K562 (cell line): ENCODE measurements at regions of chr17 and their contacts with region 1.

Region 1: GRCh38 chr17:27654654-27655524 is 23.9 kb downstream of the LGALS9 start:
- DNase-seq: peak; percentile 91 to 95 (median 92)
- ATAC-seq: peak; percentile 95
- H3K4me3 ChIP-seq: no peak overlapping the region
- H3K27ac ChIP-seq: no peak overlapping the region
- H3K4me1 ChIP-seq: peaks cover 7 to 18% of the 10 kb centered on the region in 2 experiments; a peak in 4 of 5 replicates
- H3K27me3 ChIP-seq: no peaks in the 10 kb centered on the region
- CTCF ChIP-seq: peak; percentile 89 to 99 (median 91)
- EP300 ChIP-seq: no peak
- POLR2A ChIP-seq: no peak
- RAD21 ChIP-seq: peak; percentile 71 to 85

Region 2: DNA sequence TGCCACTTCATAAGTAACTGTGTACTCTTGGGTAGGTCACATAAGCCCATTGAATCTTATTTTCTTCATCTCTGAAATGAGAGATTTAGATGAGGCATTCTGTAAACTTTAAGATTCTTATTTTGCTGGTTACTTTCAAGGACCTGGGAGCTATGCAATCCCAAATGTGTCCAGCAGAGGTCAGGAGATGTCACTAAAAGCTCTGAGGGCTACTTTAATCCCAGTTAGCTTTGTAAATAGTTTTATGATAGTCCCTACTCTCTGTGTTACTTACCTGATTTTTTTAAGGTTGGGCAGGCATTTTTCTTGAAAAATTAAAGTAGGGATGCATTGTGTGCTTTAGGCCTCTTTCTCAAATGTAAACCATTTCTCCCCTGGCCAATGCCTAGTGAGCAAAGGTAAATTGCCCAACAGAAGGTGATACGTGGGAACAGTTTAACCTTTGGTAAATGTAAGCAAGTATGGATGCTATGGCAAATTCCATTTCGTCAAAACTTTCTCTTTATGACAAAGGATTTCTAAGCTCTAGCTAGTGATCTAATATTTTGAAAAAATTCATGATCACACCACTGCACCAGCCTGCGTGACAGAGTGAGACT is 418.1 kb before region 1 on chr17:
- CTCF ChIA-PET with region 1: interaction called, 4 read pairs
- POLR2A ChIA-PET with region 1: interaction called, 7 read pairs
- in situ Hi-C with region 1: loop called (anchors 10 kb)
- intact Hi-C with region 1: loop called (anchors 2 kb)
- DNase-seq: peak; percentile 69 to 80 (median 74)
- ATAC-seq: peak; percentile 81
- H3K4me3 ChIP-seq: no peak overlapping the region
- H3K27ac ChIP-seq: no peak overlapping the region
- H3K4me1 ChIP-seq: peaks cover 0 to 4% of the 10 kb centered on the region in 2 experiments; a peak in 2 of 5 replicates
- H3K27me3 ChIP-seq: no peaks in the 10 kb centered on the region
- CTCF ChIP-seq: peak; percentile 79 to 91 (median 84)
- EP300 ChIP-seq: no peak
- POLR2A ChIP-seq: no peak
- RAD21 ChIP-seq: peak; percentile 91 to 93

Region 3: DNA sequence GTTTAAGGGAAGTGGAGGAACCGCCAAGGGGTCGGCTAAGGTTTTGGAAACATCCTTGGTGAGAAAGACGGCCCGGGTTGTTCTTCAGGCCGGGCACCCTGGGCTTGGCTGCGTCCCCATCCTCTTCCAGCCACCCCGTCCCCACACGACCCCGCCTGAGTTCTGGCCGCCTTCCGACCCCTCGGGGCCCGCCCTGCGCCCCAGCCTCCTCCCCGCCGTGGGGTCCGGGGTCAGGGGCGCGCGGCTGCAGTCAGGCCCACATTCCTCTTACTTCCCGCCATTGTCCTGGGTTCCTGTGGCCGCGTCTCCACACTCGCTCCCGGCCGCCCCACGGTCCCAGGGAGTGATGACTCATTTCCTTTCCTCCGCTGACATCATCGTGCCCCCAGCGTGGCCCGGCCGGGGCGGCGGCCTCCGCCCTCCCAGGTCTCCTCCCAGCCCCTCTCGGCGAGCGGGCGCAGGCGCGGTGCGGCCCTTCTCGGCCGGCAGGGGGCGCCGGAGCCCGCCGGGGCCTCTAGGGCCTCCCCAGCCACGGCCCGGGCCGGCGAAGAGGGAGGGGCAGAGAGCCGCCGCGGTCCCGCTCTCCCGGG is 301.3 kb before region 1 on chr17:
- CTCF ChIA-PET with region 1: interaction called, 7 read pairs
- POLR2A ChIA-PET with region 1: no interaction called
- in situ Hi-C with region 1: no loop called
- intact Hi-C with region 1: loop called (anchors 5 kb)
- DNase-seq: peak; percentile 97
- ATAC-seq: peak; percentile 92
- H3K4me3 ChIP-seq: peak overlapping the region; percentile 79
- H3K27ac ChIP-seq: peak overlapping the region; percentile 98
- H3K4me1 ChIP-seq: peaks cover 33 to 35% of the 10 kb centered on the region in 2 experiments
- H3K27me3 ChIP-seq: no peaks in the 10 kb centered on the region
- CTCF ChIP-seq: peak; percentile 82 to 97 (median 93)
- EP300 ChIP-seq: peak; percentile 81
- POLR2A ChIP-seq: peak; percentile 91
- RAD21 ChIP-seq: peak; percentile 97

Region 4: DNA sequence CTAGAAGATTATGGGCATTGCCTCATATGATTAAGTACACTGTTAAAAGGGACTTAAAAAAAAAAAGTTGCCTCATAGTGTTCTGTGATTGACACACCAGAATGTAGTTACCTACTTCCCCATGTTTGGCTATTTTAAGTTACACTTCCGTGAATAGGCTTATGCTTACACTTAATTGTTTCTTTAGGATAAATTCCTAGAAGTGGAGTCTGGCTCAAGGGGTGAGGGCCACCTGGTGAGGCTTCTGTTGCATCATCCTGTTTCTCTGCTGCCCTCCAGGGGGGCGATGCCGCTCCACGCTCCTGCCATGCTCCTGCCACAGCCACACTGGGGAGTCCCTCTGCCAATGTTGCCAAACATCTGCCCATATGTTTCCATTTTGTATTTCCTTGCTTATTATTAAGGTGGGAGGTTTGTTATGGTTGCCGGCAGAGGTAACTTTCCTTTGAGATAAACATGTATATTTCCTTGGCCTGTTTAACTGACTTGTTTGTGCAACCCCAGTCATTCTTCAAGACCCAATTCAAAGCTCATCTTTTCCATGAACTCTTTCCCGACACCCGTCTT is 125.6 kb before region 1 on chr17:
- CTCF ChIA-PET with region 1: no interaction called
- POLR2A ChIA-PET with region 1: no interaction called
- in situ Hi-C with region 1: no loop called
- intact Hi-C with region 1: no loop called
- DNase-seq: peak; percentile 37 to 86 (median 60)
- ATAC-seq: peak; percentile 73
- H3K4me3 ChIP-seq: no peak overlapping the region
- H3K27ac ChIP-seq: peak overlapping the region; percentile 80
- H3K4me1 ChIP-seq: peaks cover 36 to 81% of the 10 kb centered on the region in 2 experiments
- H3K27me3 ChIP-seq: no peaks in the 10 kb centered on the region
- CTCF ChIP-seq: peak in 2 of 3 experiments; percentile 34 to 40; a peak in 3 of 6 replicates
- EP300 ChIP-seq: peak; percentile 93
- POLR2A ChIP-seq: no peak
- RAD21 ChIP-seq: peak; percentile 35 to 56; a peak in 3 of 4 replicates

Region 5: GRCh38 chr17:27609611-27610303 is 45.1 kb before region 1 on chr17:
- CTCF ChIA-PET with region 1: interaction called, 3 read pairs
- POLR2A ChIA-PET with region 1: interaction called, 4 read pairs
- in situ Hi-C with region 1: loop called (anchors 5 kb)
- intact Hi-C with region 1: no loop called
- DNase-seq: peak in 1 of 4 experiments; percentile 31
- ATAC-seq: peak; percentile 61
- H3K4me3 ChIP-seq: no peak overlapping the region
- H3K27ac ChIP-seq: no peak overlapping the region
- H3K4me1 ChIP-seq: peaks cover 5 to 15% of the 10 kb centered on the region in 2 experiments; a peak in 4 of 5 replicates
- H3K27me3 ChIP-seq: no peaks in the 10 kb centered on the region
- CTCF ChIP-seq: peak; percentile 52 to 65 (median 54)
- EP300 ChIP-seq: no peak
- POLR2A ChIP-seq: no peak
- RAD21 ChIP-seq: peak in 1 of 2 experiments; percentile 43; a peak in 2 of 4 replicates

Region 6: GRCh38 chr17:27760069-27760885 is 105.4 kb after region 1 on chr17:
- CTCF ChIA-PET with region 1: interaction called, 28 read pairs
- POLR2A ChIA-PET with region 1: interaction called, 3 read pairs
- in situ Hi-C with region 1: loop called (anchors 5 kb)
- intact Hi-C with region 1: loop called (anchors 1 kb)
- DNase-seq: peak; percentile 63 to 79 (median 70)
- ATAC-seq: peak; percentile 86
- H3K4me3 ChIP-seq: no peak overlapping the region
- H3K27ac ChIP-seq: no peak overlapping the region
- H3K4me1 ChIP-seq: peaks cover 0 to 11% of the 10 kb centered on the region in 2 experiments; a peak in 3 of 5 replicates
- H3K27me3 ChIP-seq: peaks cover 0 to 27% of the 10 kb centered on the region in 2 experiments; a peak in 3 of 5 replicates
- CTCF ChIP-seq: peak; percentile 82 to 95 (median 93)
- EP300 ChIP-seq: no peak
- POLR2A ChIP-seq: no peak
- RAD21 ChIP-seq: peak; percentile 81 to 89

Region 7: GRCh38 chr17:27771586-27771985 is 116.7 kb after region 1 on chr17:
- CTCF ChIA-PET with region 1: no interaction called
- POLR2A ChIA-PET with region 1: no interaction called
- in situ Hi-C with region 1: no loop called
- intact Hi-C with region 1: no loop called
- DNase-seq: no peak
- ATAC-seq: no peak
- H3K4me3 ChIP-seq: no peak overlapping the region
- H3K27ac ChIP-seq: no peak overlapping the region
- H3K4me1 ChIP-seq: no peaks in the 10 kb centered on the region
- H3K27me3 ChIP-seq: peaks cover 25 to 78% of the 10 kb centered on the region in 2 experiments
- CTCF ChIP-seq: no peak
- EP300 ChIP-seq: no peak
- POLR2A ChIP-seq: no peak
- RAD21 ChIP-seq: no peak

Region 8: DNA sequence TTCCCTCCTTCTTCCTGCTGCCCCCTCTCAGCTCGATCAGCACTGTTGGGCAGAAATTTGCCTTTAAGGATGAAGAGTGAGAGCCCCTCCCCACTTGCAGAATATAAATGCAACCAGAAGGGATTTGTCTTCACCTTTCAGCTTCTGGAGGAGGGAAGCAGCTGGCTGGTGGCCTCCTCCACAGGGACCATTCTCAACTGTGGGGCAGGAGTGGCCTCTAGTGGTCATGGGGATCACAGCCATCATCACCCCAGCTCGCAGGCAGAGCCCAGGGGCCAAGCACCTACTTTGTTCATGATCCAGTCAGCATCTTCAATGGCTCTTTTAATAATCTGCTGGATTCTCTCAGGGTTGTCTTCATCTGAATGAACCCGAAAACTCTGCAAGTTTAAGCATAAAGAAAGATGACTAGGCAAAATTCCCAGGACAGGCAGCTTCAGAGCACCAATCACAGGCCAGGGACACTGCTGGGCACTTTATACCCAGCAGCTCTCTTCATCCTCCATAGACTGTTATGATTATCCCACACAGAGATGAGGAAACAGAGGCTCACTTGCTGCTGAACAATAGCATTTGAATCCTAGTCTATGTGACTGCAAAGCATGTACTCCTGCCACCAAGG is 225.2 kb after region 1 on chr17:
- CTCF ChIA-PET with region 1: interaction called, 19 read pairs
- POLR2A ChIA-PET with region 1: no interaction called
- in situ Hi-C with region 1: loop called (anchors 5 kb)
- intact Hi-C with region 1: loop called (anchors 1 kb)
- DNase-seq: peak; percentile 78 to 85 (median 80)
- ATAC-seq: peak; percentile 98
- H3K4me3 ChIP-seq: no peak overlapping the region
- H3K27ac ChIP-seq: no peak overlapping the region
- H3K4me1 ChIP-seq: no peaks in the 10 kb centered on the region
- H3K27me3 ChIP-seq: peaks cover 21 to 40% of the 10 kb centered on the region in 2 experiments
- CTCF ChIP-seq: peak; percentile 90 to 95 (median 92)
- EP300 ChIP-seq: no peak
- POLR2A ChIP-seq: no peak
- RAD21 ChIP-seq: peak; percentile 87 to 92

Region 9: DNA sequence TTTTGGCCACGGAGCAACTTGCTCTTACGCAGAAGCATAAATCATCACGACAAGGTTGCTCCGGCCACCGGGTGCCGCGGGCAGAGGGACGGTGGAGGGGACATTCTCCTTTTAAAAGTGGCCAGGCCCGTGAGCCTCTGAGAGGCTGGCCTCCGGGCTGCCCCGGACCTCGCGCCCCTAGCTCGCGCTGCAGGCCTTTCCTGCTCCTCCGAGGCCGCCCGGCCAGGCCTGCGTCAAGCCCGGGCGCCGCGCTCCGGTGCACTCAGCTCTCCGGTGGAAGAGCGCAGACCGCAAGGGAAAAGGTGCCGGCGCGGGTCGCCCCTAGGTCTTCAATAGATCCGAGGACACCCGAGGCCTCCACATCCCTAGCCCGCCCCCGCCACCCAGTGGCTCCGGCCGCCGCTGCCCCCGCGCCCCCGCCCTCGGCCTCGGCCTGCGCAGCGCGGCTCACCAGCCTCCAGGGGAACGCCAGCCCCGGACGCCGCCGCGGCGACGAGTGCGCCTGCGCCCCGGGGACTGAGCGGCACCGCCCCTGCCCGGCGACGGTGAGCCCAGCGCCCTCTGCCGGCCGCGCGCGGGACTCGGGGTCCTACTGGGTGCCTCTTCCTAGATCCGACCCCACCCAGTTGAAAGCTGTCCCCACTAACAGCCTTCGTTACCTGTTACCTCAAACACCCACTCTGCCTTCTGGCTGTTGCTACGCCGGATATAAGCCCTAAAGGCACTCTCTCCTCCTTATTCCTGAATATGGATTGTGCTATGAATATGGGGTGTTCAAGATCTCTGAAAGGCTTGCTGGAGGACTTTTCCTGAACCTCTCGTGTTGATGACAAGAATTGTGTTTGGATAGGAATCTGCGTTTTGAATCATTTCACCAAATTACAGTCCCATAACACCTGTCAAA is 238.2 kb after region 1 on chr17 and contains the start of gene LYRM9:
- CTCF ChIA-PET with region 1: no interaction called
- POLR2A ChIA-PET with region 1: no interaction called
- in situ Hi-C with region 1: loop called (anchors 5 kb)
- intact Hi-C with region 1: no loop called
- DNase-seq: peak; percentile 93 to 98 (median 96)
- ATAC-seq: peak; percentile 99
- H3K4me3 ChIP-seq: peak within 1 kb of the TSS; percentile 47
- H3K27ac ChIP-seq: peak within 1 kb of the TSS; percentile 71
- H3K4me1 ChIP-seq: peaks cover 10 to 35% of the 10 kb centered on the region in 2 experiments
- H3K27me3 ChIP-seq: no peaks in the 10 kb centered on the region
- CTCF ChIP-seq: peak; percentile 84 to 86 (median 84)
- EP300 ChIP-seq: no peak
- POLR2A ChIP-seq: peak; percentile 52; the same call in 1 of the 2 replicates
- RAD21 ChIP-seq: peak; percentile 63 to 65
- polyA plus RNA-seq, gene LYRM9: 1.0 to 1.8 TPM